ENCODE measurements at regions of chr19 and their contacts with region 1.

Region 1: GRCh38 chr19:3275583-3276340 is 51.3 kb downstream of the CELF5 start:
- DNase-seq: peak; percentile 95
- H3K4me3 ChIP-seq: peak overlapping the region; percentile 70
- H3K27ac ChIP-seq: peak overlapping the region; percentile 58
- H3K4me1 ChIP-seq: peaks cover 19% of the 10 kb centered on the region
- CTCF ChIP-seq: peak; percentile 74

Region 2: DNA sequence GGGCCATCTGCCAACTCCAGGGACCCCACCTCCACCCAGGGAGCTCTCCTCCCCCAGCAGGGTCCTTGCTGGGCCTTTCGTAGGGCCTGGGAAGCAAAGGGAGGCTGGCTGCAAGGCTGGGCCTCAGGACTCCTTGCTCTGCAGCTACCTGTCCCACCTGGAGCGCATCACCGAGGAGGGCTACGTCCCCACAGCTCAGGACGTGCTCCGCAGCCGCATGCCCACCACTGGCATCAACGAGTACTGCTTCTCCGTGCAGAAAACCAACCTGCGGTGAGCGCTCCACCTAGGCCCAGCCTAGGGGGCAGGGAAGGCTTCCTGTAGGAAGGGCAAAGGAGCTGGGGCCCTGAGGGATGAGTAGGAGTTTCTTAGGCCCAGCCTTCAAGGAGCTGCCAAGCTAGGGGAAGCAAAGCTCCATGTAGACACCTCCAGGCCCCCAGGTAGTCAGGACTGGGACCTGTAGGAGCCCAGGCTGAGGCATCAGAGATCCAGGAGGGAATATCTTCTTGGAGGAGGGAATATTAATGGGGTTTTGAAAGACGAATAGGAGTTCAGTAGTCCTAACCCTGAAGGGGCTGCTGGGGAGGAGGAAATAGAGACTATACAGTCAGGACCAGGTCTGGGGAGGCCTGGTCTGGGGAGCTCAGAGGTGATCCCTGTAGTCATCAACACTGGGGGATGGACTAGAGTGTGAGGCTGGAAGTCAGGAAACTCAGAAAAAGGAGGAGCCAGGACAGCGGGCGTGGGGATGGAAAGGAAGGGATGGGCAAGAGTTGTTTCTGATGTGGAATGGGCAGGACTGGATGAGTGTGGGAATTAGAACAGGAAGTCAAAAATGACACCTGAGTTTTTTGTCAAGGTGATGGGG is 124.0 kb before region 1 on chr19:
- CTCF ChIA-PET with region 1: no interaction called
- POLR2A ChIA-PET with region 1: no interaction called
- intact Hi-C with region 1: no loop called
- DNase-seq: no peak
- H3K4me3 ChIP-seq: no peak overlapping the region
- H3K27ac ChIP-seq: no peak overlapping the region
- H3K4me1 ChIP-seq: peaks cover 24% of the 10 kb centered on the region
- CTCF ChIP-seq: no peak

Region 3: DNA sequence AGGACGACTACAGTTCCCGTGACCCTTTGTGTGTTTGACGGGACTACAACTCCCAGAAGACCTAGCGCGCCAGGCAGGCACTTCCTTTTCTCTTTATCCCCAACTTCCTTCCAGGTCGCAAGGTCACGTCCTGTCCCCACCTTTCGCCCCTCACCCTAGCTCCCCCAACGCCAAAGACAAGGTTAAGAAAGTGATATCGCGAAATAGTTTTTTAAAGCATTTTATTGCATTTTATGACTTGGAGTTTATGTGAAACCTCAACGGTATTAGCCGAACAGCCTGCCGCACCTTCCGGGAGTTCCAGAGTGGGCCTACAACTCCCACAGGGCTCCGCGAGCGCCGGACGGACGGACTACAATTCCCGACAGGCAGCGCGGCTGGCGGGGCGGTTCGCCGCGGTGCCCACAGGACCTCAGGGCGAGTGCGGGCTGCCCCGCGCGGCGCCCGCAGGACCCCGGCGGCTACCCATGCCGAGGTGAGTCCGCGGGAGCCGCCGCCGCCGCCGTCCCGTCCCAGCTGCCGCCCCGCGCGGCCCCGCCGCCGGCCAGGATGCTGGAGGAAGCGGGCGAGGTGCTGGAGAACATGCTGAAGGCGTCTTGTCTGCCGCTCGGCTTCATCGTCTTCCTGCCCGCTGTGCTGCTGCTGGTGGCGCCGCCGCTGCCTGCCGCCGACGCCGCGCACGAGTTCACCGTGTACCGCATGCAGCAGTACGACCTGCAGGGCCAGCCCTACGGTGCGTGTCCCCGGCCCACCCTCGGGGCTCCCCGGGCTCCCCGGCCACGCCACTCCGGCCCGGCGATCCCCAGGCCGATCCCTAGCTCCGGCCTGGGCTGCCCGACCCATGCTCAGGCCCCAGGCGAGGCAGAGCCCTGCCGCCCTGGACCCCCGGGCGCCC is 90.0 kb before region 1 on chr19 and contains the start of gene NCLN:
- CTCF ChIA-PET with region 1: no interaction called
- POLR2A ChIA-PET with region 1: no interaction called
- intact Hi-C with region 1: no loop called
- DNase-seq: peak; percentile 93
- H3K4me3 ChIP-seq: peak within 1 kb of the TSS; percentile 97
- H3K27ac ChIP-seq: peak within 1 kb of the TSS; percentile 72
- H3K4me1 ChIP-seq: peaks cover 28% of the 10 kb centered on the region
- CTCF ChIP-seq: no peak
- total RNA-seq, gene NCLN: 33.2 and 49.2 TPM in 2 replicates

Region 4: DNA sequence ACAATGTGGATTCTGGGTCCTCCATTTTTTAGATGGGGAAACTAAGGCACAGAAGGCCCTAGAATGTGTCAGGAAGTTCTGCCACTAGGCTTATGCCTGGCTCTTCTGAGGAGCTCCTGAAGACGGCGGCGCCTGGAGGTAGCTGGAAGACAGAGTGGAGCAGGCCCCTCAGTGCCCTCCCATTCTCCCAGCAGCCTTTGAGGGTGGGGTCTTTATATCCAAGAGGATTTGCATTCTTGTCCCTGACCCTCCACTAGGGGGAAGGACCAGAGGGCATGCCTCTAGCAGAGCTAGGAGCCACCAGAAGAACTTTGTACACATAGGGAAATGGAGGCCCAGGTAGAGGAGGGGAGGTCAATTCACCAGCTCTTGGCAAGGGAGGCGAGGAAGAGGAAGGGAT is 41.9 kb before region 1 on chr19:
- CTCF ChIA-PET with region 1: no interaction called
- POLR2A ChIA-PET with region 1: no interaction called
- intact Hi-C with region 1: no loop called
- DNase-seq: no peak
- H3K4me3 ChIP-seq: no peak overlapping the region
- H3K27ac ChIP-seq: no peak overlapping the region
- H3K4me1 ChIP-seq: no peaks in the 10 kb centered on the region
- CTCF ChIP-seq: no peak

Region 5: GRCh38 chr19:3243819-3244700 is 31.7 kb before region 1 on chr19:
- CTCF ChIA-PET with region 1: no interaction called
- POLR2A ChIA-PET with region 1: no interaction called
- intact Hi-C with region 1: no loop called
- DNase-seq: peak; percentile 37
- H3K4me3 ChIP-seq: no peak overlapping the region
- H3K27ac ChIP-seq: no peak overlapping the region
- H3K4me1 ChIP-seq: no peaks in the 10 kb centered on the region
- CTCF ChIP-seq: no peak

Region 6: GRCh38 chr19:3304871-3305423 is 29.2 kb after region 1 on chr19:
- CTCF ChIA-PET with region 1: interaction called, 10 read pairs
- POLR2A ChIA-PET with region 1: interaction called, 3 read pairs
- intact Hi-C with region 1: no loop called
- DNase-seq: peak; percentile 74
- H3K4me3 ChIP-seq: no peak overlapping the region
- H3K27ac ChIP-seq: no peak overlapping the region
- H3K4me1 ChIP-seq: no peaks in the 10 kb centered on the region
- CTCF ChIP-seq: peak; percentile 86

Region 7: GRCh38 chr19:3434712-3435553 is 159.2 kb after region 1 on chr19:
- CTCF ChIA-PET with region 1: no interaction called
- POLR2A ChIA-PET with region 1: no interaction called
- intact Hi-C with region 1: loop called (anchors 1 kb)
- DNase-seq: peak; percentile 99
- H3K4me3 ChIP-seq: peak overlapping the region; percentile 86
- H3K27ac ChIP-seq: peak overlapping the region; percentile 54
- H3K4me1 ChIP-seq: peaks cover 6% of the 10 kb centered on the region
- CTCF ChIP-seq: no peak

Region 8: GRCh38 chr19:3586124-3586626 is 310.4 kb after region 1 on chr19:
- CTCF ChIA-PET with region 1: interaction called, 10 read pairs
- POLR2A ChIA-PET with region 1: no interaction called
- intact Hi-C with region 1: no loop called
- DNase-seq: peak; percentile 30
- H3K4me3 ChIP-seq: no peak overlapping the region
- H3K27ac ChIP-seq: no peak overlapping the region
- H3K4me1 ChIP-seq: no peaks in the 10 kb centered on the region
- CTCF ChIP-seq: peak; percentile 80

Region 9: DNA sequence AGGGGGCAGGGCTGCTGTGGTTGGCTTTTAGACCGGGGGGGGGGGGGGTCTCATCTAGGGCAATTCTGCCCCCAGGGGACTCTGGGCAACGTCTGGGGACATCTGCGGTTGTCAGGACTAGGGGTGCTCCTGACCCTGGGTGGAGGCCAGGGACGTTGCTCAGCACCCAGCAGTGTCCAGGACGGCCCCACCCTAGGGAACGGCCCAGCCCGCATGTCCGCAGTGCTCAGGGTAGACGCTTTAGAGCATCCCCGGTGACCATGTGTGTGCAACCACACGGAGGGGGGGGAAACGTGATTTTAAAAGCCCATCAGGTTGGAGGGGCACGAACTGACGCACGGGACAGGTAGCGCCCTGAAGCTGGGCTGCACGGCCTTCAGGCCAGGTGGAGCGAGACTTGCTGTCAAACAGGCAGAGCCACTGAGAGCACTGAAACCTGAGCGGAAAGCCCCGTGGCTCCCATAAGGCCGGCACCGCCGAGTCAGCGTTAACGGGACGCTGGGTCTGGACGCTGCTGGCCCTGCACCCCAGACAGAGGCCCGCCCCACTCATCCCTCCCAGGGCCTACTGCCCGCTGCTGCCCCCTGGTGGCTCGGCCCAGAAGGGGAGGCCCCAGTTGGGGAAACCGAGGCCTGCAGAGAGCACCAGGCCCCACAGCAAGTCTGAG is 342.5 kb after region 1 on chr19:
- CTCF ChIA-PET with region 1: interaction called, 11 read pairs
- POLR2A ChIA-PET with region 1: no interaction called
- intact Hi-C with region 1: no loop called
- DNase-seq: peak; percentile 37
- H3K4me3 ChIP-seq: no peak overlapping the region
- H3K27ac ChIP-seq: no peak overlapping the region
- H3K4me1 ChIP-seq: no peaks in the 10 kb centered on the region
- CTCF ChIP-seq: peak; percentile 85

Measured in OCI-LY7 (cell line).